ENCODE measurements at regions of chr5 and their contacts with region 1.

Region 1: GRCh38 chr5:174675916-174676315 is 48.5 kb upstream of the MSX2 start:
- DNase-seq: no peak
- ATAC-seq: no peak
- H3K4me3 ChIP-seq: no peak overlapping the region
- H3K27ac ChIP-seq: no peak overlapping the region
- H3K4me1 ChIP-seq: no peaks in the 10 kb centered on the region
- H3K27me3 ChIP-seq: peaks cover 0 to 8% (median 0%) of the 10 kb centered on the region in 9 donors
- CTCF ChIP-seq: no peak
- POLR2A ChIP-seq: no peak

Region 2: DNA sequence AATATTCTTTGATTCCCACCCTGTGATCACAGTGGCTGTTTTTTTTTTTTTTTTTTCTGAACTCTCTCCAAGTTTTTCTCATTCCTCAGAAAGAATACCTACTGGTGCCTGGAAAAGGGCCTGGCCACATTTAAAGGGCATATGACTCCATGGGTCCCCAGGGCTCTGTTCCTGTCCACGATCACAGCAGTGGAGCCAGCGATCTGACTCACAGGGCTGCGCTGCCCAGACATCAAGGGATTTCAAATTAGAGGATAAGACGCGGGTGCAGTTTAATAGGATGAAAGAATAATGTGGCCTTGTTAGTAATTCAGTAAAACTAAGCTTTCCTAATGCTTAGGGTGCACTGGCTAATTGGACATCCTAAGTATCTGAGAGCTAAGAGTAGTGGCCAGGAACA is 126.7 kb before region 1 on chr5:
- intact Hi-C with region 1: no loop called
- DNase-seq: no peak
- ATAC-seq: no peak
- H3K4me3 ChIP-seq: no peak overlapping the region
- H3K27ac ChIP-seq: no peak overlapping the region
- H3K4me1 ChIP-seq: no peaks in the 10 kb centered on the region
- H3K27me3 ChIP-seq: peaks cover 0 to 10% (median 0%) of the 10 kb centered on the region in 9 donors
- CTCF ChIP-seq: no peak
- POLR2A ChIP-seq: no peak

Region 3: GRCh38 chr5:174693713-174694385 is 17.9 kb after region 1 on chr5:
- intact Hi-C with region 1: loop called in 1 of 10 experiments (anchors 1 kb)
- DNase-seq: no peak
- ATAC-seq: no peak
- H3K4me3 ChIP-seq: no peak overlapping the region
- H3K27ac ChIP-seq: no peak overlapping the region
- H3K4me1 ChIP-seq: peaks cover 0 to 7% (median 0%) of the 10 kb centered on the region in 12 donors
- H3K27me3 ChIP-seq: peaks cover 13 to 85% (median 47%) of the 10 kb centered on the region in 9 donors
- CTCF ChIP-seq: no peak
- POLR2A ChIP-seq: no peak